ENCODE measurements at regions of chr20 and their contacts with region 1.

Region 1: GRCh38 chr20:11387189-11387754 is 530.4 kb upstream of the BTBD3 start:
- DNase-seq: peak; percentile 84
- H3K4me3 Mint-ChIP-seq: no peak overlapping the region
- H3K27ac Mint-ChIP-seq: peak overlapping the region; percentile 20
- H3K4me1 Mint-ChIP-seq: peaks cover 19% of the 10 kb centered on the region
- H3K27me3 Mint-ChIP-seq: no peaks in the 10 kb centered on the region
- CTCF ChIP-seq: no peak

Region 2: DNA sequence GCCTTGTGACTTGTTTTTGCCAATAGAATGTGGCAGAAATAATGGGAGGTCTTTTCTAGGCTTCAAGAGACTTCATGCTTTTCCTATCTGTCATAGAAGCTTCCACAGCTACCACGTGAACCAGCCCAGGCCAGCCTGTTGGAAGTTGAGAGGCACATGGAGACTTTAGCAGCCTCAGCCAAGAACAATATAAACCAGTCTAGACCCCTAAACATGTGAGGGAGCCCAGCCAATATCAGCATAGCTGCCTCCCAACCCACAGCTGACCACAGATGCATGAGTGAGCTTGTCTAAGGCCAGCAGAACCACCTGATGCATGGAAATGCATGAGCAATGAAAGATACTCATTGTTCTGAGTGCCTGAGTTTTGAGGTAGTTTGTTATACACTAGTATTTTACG is 10.3 kb before region 1 on chr20:
- CTCF ChIA-PET with region 1: no interaction called
- POLR2A ChIA-PET with region 1: interaction called, 11 read pairs
- intact Hi-C with region 1: no loop called
- DNase-seq: peak; percentile 55
- H3K4me3 Mint-ChIP-seq: no peak overlapping the region
- H3K27ac Mint-ChIP-seq: no peak overlapping the region
- H3K4me1 Mint-ChIP-seq: peaks cover 36% of the 10 kb centered on the region
- H3K27me3 Mint-ChIP-seq: no peaks in the 10 kb centered on the region
- CTCF ChIP-seq: no peak

Region 3: DNA sequence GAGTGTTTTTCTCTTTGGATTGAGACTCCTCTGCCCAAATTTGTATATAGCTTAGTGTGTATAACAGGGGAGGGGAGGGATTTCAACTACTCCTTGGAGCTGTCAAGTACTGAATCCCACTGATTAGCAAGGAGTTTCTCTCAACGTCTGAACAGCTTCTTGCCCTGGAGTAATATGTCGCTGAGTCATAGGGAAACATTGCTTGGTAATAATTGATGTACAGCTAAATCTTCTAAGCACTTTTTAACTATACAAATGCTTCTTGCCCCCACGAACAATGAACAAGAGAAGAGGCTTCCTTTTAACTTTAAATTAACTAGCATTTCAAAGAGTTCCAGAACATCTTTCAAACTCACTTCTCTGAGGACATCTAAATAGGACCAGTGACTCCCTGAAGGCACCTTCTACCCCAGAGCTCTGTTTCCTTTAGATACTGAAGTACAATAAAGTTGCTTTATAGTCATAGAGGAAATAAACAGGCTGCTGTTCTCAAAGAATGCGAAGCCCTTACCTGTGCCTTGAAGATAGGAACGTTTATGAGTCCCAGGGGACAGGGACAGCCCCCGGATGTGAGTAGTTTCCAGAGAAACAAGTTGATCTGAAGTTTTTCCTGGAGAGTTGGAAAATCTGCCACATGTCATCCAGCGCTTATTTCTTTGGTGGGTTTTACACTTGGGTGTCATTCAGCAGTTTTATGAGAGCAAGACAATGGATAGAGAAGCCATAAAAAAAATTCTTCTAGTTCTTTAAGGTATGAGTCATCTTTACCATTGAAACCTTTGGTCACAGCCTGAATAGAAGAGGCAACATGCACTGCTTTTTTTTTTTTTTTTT is 67.9 kb after region 1 on chr20:
- CTCF ChIA-PET with region 1: no interaction called
- POLR2A ChIA-PET with region 1: no interaction called
- intact Hi-C with region 1: loop called (anchors 5 kb)
- DNase-seq: peak; percentile 76
- H3K4me3 Mint-ChIP-seq: peak overlapping the region; percentile 26
- H3K27ac Mint-ChIP-seq: peak overlapping the region; percentile 46
- H3K4me1 Mint-ChIP-seq: peaks cover 54% of the 10 kb centered on the region
- H3K27me3 Mint-ChIP-seq: no peaks in the 10 kb centered on the region
- CTCF ChIP-seq: no peak